ENCODE measurements at regions of chr2 and their contacts with region 1.

Region 1: GRCh38 chr2:20051532-20052228 is at the start of gene LAPTM4A:
- DNase-seq: peak; percentile 99 to 100
- ATAC-seq: peak; percentile 98 to 99
- H3K4me3 ChIP-seq: peak within 1 kb of the TSS; percentile 80 to 100 (median 87)
- H3K27ac ChIP-seq: peak within 1 kb of the TSS; percentile 95 to 100 (median 95)
- H3K4me1 ChIP-seq: peaks cover 32% of the 10 kb centered on the region in 2 donors
- H3K27me3 ChIP-seq: no peaks in the 10 kb centered on the region
- CTCF ChIP-seq: peak in 4 of 5 experiments; percentile 16 to 46 (median 39)
- POLR2A ChIP-seq: peak; percentile 90 to 93
- total RNA-seq, gene LAPTM4A: 53.8 to 62.3 (median 57.4) TPM

Region 2: GRCh38 chr2:19901442-19902215 is 150.1 kb before region 1 on chr2 and contains the start of gene TTC32:
- in situ Hi-C with region 1: no loop called
- intact Hi-C with region 1: loop called (anchors 1 kb)
- DNase-seq: peak; percentile 88 to 90
- ATAC-seq: peak; percentile 95
- H3K4me3 ChIP-seq: peak within 1 kb of the TSS; percentile 60 to 96 (median 92)
- H3K27ac ChIP-seq: peak within 1 kb of the TSS; percentile 90 to 98 (median 96)
- H3K4me1 ChIP-seq: peaks cover 43 to 49% of the 10 kb centered on the region in 2 donors
- H3K27me3 ChIP-seq: no peaks in the 10 kb centered on the region
- CTCF ChIP-seq: peak in 2 of 5 experiments; percentile 11 to 35
- POLR2A ChIP-seq: peak; percentile 87 to 89
- total RNA-seq, gene TTC32: 6.6 to 19.6 (median 10.7) TPM

Region 3: GRCh38 chr2:19989681-19990415 is 61.8 kb before region 1 on chr2 and contains the start of gene WDR35:
- in situ Hi-C with region 1: no loop called
- intact Hi-C with region 1: loop called (anchors 2 kb)
- DNase-seq: peak; percentile 74 to 83
- ATAC-seq: peak; percentile 96
- H3K4me3 ChIP-seq: peak within 1 kb of the TSS; percentile 71 to 91 (median 88)
- H3K27ac ChIP-seq: peak within 1 kb of the TSS; percentile 64 to 72 (median 68)
- H3K4me1 ChIP-seq: peaks cover 11 to 19% of the 10 kb centered on the region in 2 donors
- H3K27me3 ChIP-seq: peaks cover 0 to 8% (median 0%) of the 10 kb centered on the region in 3 donors
- CTCF ChIP-seq: no peak
- POLR2A ChIP-seq: peak; percentile 14 to 50
- total RNA-seq, gene WDR35: 3.3 to 4.5 (median 3.7) TPM

Region 4: GRCh38 chr2:20091305-20091991 is 39.8 kb after region 1 on chr2:
- in situ Hi-C with region 1: no loop called
- intact Hi-C with region 1: loop called (anchors 1 kb)
- DNase-seq: peak; percentile 76 to 84
- ATAC-seq: peak; percentile 88 to 93
- H3K4me3 ChIP-seq: peak overlapping the region in 1 of 4 donors; percentile 11
- H3K27ac ChIP-seq: peak overlapping the region; percentile 25 to 58 (median 44)
- H3K4me1 ChIP-seq: peaks cover 25 to 39% of the 10 kb centered on the region in 2 donors
- H3K27me3 ChIP-seq: no peaks in the 10 kb centered on the region
- CTCF ChIP-seq: no peak
- POLR2A ChIP-seq: no peak

Region 5: DNA sequence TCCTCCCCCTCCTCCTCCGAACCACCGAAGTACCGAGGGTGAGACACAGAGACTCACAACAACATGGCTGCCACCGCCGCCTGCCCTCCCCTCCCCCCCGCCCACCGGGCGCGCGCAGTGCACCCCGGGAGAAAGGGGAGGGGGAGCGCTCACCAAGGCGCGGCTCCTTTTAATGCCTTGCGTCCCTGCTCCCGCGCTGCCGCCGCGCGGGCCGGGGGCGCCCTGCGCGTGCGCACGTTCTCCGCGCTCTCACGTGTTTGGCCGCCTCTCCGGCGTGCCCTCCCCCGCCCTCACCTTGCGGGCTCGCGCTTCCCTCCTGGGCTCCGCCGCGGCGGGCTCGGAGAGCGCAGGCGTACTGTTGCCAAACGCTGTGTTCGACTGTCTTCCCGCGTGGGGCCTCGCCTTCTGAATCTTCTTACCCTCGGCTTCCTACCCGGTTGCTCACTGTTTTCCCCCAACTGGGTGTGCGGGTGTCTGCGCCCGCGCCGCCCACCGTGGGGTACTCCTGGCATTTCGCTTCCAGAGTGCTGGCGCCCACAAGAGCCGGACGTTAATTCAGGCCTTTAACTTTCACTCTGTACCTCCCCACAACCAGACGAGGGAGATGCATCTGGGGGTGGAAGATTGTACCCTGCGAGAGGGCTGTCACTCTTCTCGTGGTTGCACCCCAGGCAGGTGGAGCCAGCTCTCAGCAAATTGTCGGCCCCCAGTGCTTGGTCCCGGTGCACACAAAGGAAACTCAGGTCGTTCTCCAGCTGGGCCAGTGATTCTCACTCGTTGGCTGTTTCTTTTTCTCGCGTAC is 299.3 kb after region 1 on chr2 and contains the start of gene PUM2:
- in situ Hi-C with region 1: no loop called
- intact Hi-C with region 1: loop called (anchors 5 kb)
- DNase-seq: peak; percentile 88 to 95
- ATAC-seq: peak; percentile 87 to 89
- H3K4me3 ChIP-seq: peak within 1 kb of the TSS; percentile 86 to 98 (median 95)
- H3K27ac ChIP-seq: peak within 1 kb of the TSS; percentile 93 to 99 (median 98)
- H3K4me1 ChIP-seq: peaks cover 42 to 44% of the 10 kb centered on the region in 2 donors
- H3K27me3 ChIP-seq: no peaks in the 10 kb centered on the region
- CTCF ChIP-seq: peak in 2 of 5 experiments; percentile 9 to 23
- POLR2A ChIP-seq: peak; percentile 53 to 71
- total RNA-seq, gene PUM2: 26.0 to 36.4 (median 29.6) TPM

Region 6: GRCh38 chr2:20642055-20642971 is 590.6 kb after region 1 on chr2:
- in situ Hi-C with region 1: loop called in 1 of 4 experiments (anchors 25 kb)
- intact Hi-C with region 1: no loop called
- DNase-seq: peak; percentile 56 to 75
- ATAC-seq: peak; percentile 84 to 89
- H3K4me3 ChIP-seq: no peak overlapping the region
- H3K27ac ChIP-seq: peak overlapping the region in 3 of 4 donors; percentile 29 to 52 (median 42)
- H3K4me1 ChIP-seq: peaks cover 0 to 14% of the 10 kb centered on the region in 2 donors
- H3K27me3 ChIP-seq: no peaks in the 10 kb centered on the region
- CTCF ChIP-seq: peak; percentile 88 to 99 (median 97)
- POLR2A ChIP-seq: no peak

Region 7: GRCh38 chr2:20650880-20651730 is 599.4 kb after region 1 on chr2 and contains the start of gene HS1BP3:
- in situ Hi-C with region 1: loop called in 1 of 4 experiments (anchors 25 kb)
- intact Hi-C with region 1: loop called (anchors 5 kb)
- DNase-seq: peak; percentile 67 to 76
- ATAC-seq: peak; percentile 89 to 93
- H3K4me3 ChIP-seq: peak within 1 kb of the TSS; percentile 73 to 99 (median 94)
- H3K27ac ChIP-seq: peak within 1 kb of the TSS; percentile 78 to 92 (median 88)
- H3K4me1 ChIP-seq: peaks cover 15 to 18% of the 10 kb centered on the region in 2 donors
- H3K27me3 ChIP-seq: no peaks in the 10 kb centered on the region
- CTCF ChIP-seq: peak in 4 of 5 experiments; percentile 98 to 100 (median 99)
- POLR2A ChIP-seq: peak; percentile 81 to 83
- total RNA-seq, gene HS1BP3: 16.6 to 26.9 (median 19.4) TPM

Measured in gastrocnemius medialis (tissue), 4 donors.